Lower lobe of right lung (tissue), 2 donors: ENCODE measurements at regions of chr2 and their contacts with region 1.

Region 1: GRCh38 chr2:16756831-16757644 is 91.4 kb upstream of the CYRIA start:
- DNase-seq: peak; percentile 84
- ATAC-seq: peak; percentile 92 to 94
- H3K4me3 ChIP-seq: no peak overlapping the region
- H3K27ac ChIP-seq: peak overlapping the region; percentile 3
- H3K4me1 ChIP-seq: peaks cover 7% of the 10 kb centered on the region
- H3K27me3 ChIP-seq: no peaks in the 10 kb centered on the region
- CTCF ChIP-seq: peak; percentile 89

Region 2: DNA sequence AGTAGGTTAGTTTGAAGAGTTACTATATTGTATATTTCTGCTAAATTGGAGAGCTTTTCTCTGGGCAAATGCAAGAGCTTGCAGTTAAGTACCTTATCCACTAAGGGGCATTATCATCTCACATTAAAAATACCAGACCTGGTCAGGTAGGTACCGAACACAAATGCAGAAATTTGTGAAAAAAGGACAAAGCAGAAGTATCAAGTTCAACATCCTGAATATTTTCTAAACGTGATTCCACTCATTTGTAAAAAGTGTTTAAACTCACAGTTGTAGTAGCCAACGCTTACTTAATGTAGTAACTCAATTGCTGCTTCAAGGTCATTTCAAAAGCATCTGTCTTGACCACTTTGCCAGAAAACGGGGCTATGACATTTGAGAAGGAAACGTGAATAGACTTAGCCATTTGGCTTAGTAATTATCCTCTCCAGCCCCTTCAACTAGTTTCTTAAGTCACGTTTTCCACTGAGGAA is 143.5 kb before region 1 on chr2:
- intact Hi-C with region 1: loop called (anchors 10 kb)
- DNase-seq: no peak
- ATAC-seq: no peak
- H3K4me3 ChIP-seq: no peak overlapping the region
- H3K27ac ChIP-seq: no peak overlapping the region
- H3K4me1 ChIP-seq: peaks cover 56% of the 10 kb centered on the region
- H3K27me3 ChIP-seq: no peaks in the 10 kb centered on the region
- CTCF ChIP-seq: peak; percentile 40

Region 3: DNA sequence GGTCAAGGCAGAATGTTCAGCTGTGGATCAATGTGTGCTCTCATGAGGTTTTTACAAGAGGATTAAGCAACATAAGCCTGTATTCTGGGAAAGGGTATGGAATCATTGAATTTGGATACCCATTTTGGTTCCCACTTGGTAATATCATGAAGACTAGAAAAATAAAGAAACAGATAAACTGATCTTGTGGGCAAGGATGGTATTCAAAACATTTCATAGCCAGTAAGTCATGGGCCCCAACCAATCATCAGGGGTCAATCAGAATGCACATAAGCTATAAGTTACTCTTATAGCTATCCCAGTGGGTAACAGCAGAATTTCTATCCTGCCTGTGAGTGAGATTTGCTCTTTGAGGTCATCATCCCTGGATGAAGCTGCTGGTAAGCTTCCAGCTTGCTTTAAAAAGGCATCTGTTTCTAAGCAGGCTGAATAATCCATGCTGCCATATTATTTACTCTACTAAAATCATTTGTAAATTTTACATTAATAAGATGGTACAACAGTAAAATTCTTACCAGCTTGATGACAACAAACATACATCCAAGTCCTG is 470.0 kb after region 1 on chr2:
- intact Hi-C with region 1: no loop called
- DNase-seq: no peak
- ATAC-seq: no peak
- H3K4me3 ChIP-seq: no peak overlapping the region
- H3K27ac ChIP-seq: no peak overlapping the region
- H3K4me1 ChIP-seq: no peaks in the 10 kb centered on the region
- H3K27me3 ChIP-seq: no peaks in the 10 kb centered on the region
- CTCF ChIP-seq: no peak